ENCODE measurements at regions of chr10 and their contacts with region 1.

Region 1: GRCh38 chr10:91632671-91633550 is at the start of gene PPP1R3C:
- DNase-seq: peak; percentile 83
- ATAC-seq: peak; percentile 95
- H3K4me3 Mint-ChIP-seq: peak within 1 kb of the TSS; percentile 65
- H3K27ac Mint-ChIP-seq: no peak within 1 kb of the TSS
- H3K4me1 Mint-ChIP-seq: peaks cover 8% of the 10 kb centered on the region
- H3K27me3 Mint-ChIP-seq: peaks cover 59% of the 10 kb centered on the region
- total RNA-seq, gene PPP1R3C: 0.63 to 0.71 TPM

Region 2: DNA sequence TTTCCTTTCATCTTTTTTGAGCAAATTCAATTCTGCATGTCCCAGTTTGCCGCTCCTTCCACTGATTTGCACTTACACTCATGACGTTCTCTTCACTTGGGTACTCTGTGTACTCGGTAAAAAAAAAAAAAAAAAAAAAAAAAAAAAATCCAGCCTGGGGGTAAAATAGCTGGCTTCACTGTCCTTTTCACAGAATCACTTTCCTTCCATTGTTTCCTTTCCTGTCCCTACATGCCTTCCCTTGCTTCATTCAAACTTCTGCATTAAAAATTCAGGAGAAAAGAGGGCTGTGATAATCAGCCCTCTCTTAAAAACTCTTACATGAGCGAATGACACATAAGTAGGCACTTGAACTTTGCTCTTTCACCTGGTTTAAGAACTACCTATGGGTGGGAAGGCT is 720.7 kb before region 1 on chr10:
- CTCF ChIA-PET with region 1: interaction called, 4 read pairs
- POLR2A ChIA-PET with region 1: no interaction called
- intact Hi-C with region 1: loop called in 1 of 2 experiments (anchors 10 kb)
- DNase-seq: no peak
- ATAC-seq: no peak
- H3K4me3 Mint-ChIP-seq: no peak overlapping the region
- H3K27ac Mint-ChIP-seq: no peak overlapping the region
- H3K4me1 Mint-ChIP-seq: peaks cover 2% of the 10 kb centered on the region
- H3K27me3 Mint-ChIP-seq: no peaks in the 10 kb centered on the region

Region 3: GRCh38 chr10:91409869-91410637 is 222.9 kb before region 1 on chr10 and contains the start of gene HECTD2:
- CTCF ChIA-PET with region 1: interaction called, 3 read pairs
- POLR2A ChIA-PET with region 1: no interaction called
- intact Hi-C with region 1: loop called in 1 of 2 experiments (anchors 5 kb)
- DNase-seq: peak; percentile 90
- ATAC-seq: peak; percentile 80
- H3K4me3 Mint-ChIP-seq: peak within 1 kb of the TSS; percentile 86
- H3K27ac Mint-ChIP-seq: peak within 1 kb of the TSS; percentile 97
- H3K4me1 Mint-ChIP-seq: peaks cover 21% of the 10 kb centered on the region
- H3K27me3 Mint-ChIP-seq: peaks cover 4% of the 10 kb centered on the region
- total RNA-seq, gene HECTD2: 3.5 to 9.7 TPM

Region 4: GRCh38 chr10:91551856-91552255 is 81.1 kb before region 1 on chr10:
- CTCF ChIA-PET with region 1: interaction called, 7 read pairs
- POLR2A ChIA-PET with region 1: no interaction called
- intact Hi-C with region 1: loop called in 1 of 2 experiments (anchors 5 kb)
- DNase-seq: peak; percentile 36
- ATAC-seq: no peak
- H3K4me3 Mint-ChIP-seq: no peak overlapping the region
- H3K27ac Mint-ChIP-seq: no peak overlapping the region
- H3K4me1 Mint-ChIP-seq: no peaks in the 10 kb centered on the region
- H3K27me3 Mint-ChIP-seq: peaks cover 6% of the 10 kb centered on the region

Region 5: DNA sequence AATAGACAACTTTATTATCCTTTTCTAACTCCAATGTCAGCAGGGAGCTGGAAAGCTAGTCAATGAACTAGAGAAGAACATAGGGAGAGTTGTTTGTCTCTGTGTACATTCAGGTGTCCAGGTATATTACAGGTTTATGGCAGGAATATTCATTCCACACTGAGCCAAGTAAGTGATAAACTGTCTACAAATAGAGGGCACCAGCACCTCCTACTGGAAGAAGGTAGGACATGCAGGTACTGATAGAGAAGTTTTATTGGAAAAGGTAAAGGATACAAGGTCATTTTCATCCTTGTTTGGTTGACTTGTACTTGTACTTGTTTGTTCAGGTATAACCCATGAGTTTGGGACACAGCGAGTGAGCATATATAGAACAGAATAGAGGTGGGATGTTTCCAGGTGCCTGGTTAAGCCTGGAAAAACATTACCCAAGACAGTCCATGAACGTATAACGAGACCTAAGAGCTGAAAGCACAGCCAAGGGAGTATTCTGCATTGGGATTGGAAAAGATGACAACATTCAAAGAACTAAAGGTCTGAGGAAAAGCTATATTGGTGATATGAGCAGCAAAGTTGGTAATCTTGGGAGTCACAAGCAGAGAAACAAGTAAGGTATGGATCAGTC is 61.4 kb after region 1 on chr10:
- CTCF ChIA-PET with region 1: interaction called, 7 read pairs
- POLR2A ChIA-PET with region 1: interaction called, 3 read pairs
- intact Hi-C with region 1: loop called in 1 of 2 experiments (anchors 1 kb)
- DNase-seq: peak; percentile 31
- ATAC-seq: no peak
- H3K4me3 Mint-ChIP-seq: no peak overlapping the region
- H3K27ac Mint-ChIP-seq: no peak overlapping the region
- H3K4me1 Mint-ChIP-seq: peaks cover 4% of the 10 kb centered on the region
- H3K27me3 Mint-ChIP-seq: peaks cover 4% of the 10 kb centered on the region

Region 6: GRCh38 chr10:91709394-91709798 is 76.5 kb after region 1 on chr10:
- CTCF ChIA-PET with region 1: no interaction called
- POLR2A ChIA-PET with region 1: no interaction called
- intact Hi-C with region 1: no loop called
- DNase-seq: no peak
- ATAC-seq: no peak
- H3K4me3 Mint-ChIP-seq: no peak overlapping the region
- H3K27ac Mint-ChIP-seq: no peak overlapping the region
- H3K4me1 Mint-ChIP-seq: no peaks in the 10 kb centered on the region
- H3K27me3 Mint-ChIP-seq: peaks cover 12% of the 10 kb centered on the region